Dorsolateral prefrontal cortex (tissue), 120 donors: ENCODE measurements at regions of chr1 and their contacts with region 1.

Region 1: DNA sequence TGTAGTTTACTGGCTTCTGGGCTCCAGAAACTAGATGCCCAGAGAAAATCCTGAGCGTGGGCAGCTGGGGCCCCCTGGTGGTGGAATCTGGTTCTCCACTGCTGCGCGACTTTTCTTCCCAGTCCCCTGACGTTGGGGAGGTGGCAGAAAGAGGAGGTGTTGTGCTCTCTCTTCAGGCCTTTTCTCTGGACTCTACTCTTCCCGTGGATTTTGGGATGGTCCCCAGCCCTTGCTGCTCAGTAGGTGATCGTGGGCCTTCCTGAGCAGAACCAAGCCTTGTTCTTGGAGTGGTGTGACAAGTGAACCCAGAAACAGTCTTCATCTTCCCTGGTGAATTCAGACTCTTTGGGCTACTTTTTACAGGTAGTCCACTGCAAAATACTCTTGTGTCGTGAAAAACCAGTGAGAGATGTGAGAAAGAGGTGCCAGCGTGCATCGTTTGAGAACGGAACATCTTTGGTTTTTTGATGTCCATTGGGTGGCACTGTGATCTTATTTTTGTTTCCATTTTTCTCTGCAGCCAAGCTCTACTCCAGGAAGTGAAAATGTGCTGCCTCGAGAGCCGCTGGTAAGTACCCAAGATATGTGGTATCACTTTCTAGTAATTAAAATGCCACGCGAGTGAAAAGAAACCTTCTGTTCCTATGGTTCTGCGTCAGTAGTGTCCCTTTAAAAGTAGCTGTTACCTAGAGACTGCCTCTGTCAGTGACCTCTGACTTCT is 20.2 kb downstream of the PEX14 start:
- DNase-seq: peak; percentile 53 to 87 (median 80)
- H3K4me3 ChIP-seq: peak overlapping the region in 58 of 59 donors; percentile 11 to 63 (median 48)
- H3K27ac ChIP-seq: peak overlapping the region in 40 of 59 donors; percentile 12 to 80 (median 61)
- H3K27me3 ChIP-seq: no peaks in the 10 kb centered on the region
- CTCF ChIP-seq: peak; percentile 67 to 98 (median 91)

Region 2: GRCh38 chr1:10378081-10378841 is 116.7 kb before region 1 on chr1:
- intact Hi-C with region 1: loop called in 1 of 2 experiments (anchors 5 kb)
- DNase-seq: peak in 5 of 10 donors; percentile 37 to 64 (median 48)
- H3K4me3 ChIP-seq: no peak overlapping the region
- H3K27ac ChIP-seq: peak overlapping the region in 58 of 59 donors; percentile 10 to 90 (median 76)
- H3K27me3 ChIP-seq: no peaks in the 10 kb centered on the region
- CTCF ChIP-seq: no peak

Region 3: DNA sequence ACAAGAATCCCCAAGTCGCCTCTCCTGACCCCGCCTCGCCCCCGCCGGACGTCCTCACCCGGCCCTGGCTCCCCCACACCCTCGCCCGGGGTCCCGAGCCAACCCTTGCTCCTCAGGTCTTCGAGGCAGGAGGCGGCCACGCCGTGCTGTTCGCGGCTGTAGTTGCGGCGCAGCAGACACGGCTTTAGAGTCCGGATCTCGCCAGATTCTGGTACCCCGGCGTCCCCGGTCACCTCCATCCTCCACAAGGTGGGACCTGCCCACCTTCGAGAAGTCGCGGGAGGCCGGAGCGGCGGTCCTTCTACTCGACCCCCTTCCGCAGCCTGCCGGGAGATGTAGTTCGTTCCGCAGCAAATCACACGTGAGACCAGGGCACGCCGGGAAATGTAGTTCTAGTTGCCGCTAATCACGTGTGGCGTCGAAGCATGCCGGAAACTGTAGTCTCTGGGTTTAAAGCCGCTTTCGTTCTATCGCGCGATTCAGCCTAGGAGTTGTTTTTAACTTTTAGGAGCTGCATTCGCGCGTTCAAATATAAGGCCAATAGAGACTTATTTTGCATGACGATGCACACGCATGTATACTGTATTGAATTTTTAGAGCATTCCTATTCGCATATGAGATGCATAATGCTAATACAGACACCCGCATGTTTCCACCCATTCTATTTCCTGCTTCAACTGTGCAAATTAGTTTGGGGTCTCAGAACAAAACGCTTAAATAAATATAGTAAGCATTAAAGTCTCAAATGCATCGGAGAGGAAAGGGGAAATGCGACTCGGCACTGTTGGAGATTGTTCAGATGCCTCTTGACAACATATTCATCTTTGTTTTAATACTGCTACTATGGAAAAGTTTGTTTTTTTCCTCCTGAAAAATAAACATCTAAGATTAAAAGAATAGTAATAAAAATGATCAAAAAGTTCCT is 22.4 kb before region 1 on chr1 and contains the start of gene DFFA:
- intact Hi-C with region 1: loop called (anchors 2 kb)
- DNase-seq: peak; percentile 91 to 98 (median 96)
- H3K4me3 ChIP-seq: peak within 1 kb of the TSS; percentile 55 to 99 (median 89)
- H3K27ac ChIP-seq: peak within 1 kb of the TSS in 52 of 59 donors; percentile 2 to 88 (median 64)
- H3K27me3 ChIP-seq: no peaks in the 10 kb centered on the region
- CTCF ChIP-seq: peak in 37 of 56 donors; percentile 7 to 55 (median 30)
- total RNA-seq, gene DFFA: 20.0 to 49.9 (median 32.7) TPM

Region 4: GRCh38 chr1:10867138-10867721 is 372.3 kb after region 1 on chr1:
- intact Hi-C with region 1: loop called in 1 of 2 experiments (anchors 5 kb)
- DNase-seq: peak in 8 of 10 donors; percentile 31 to 73 (median 48)
- H3K4me3 ChIP-seq: peak overlapping the region; percentile 22 to 66 (median 48)
- H3K27ac ChIP-seq: peak overlapping the region in 1 of 59 donors; percentile 18
- H3K27me3 ChIP-seq: peaks cover 0 to 14% (median 0%) of the 10 kb centered on the region in 45 donors
- CTCF ChIP-seq: peak in 55 of 56 donors; percentile 14 to 96 (median 73)